Esophagus muscularis mucosa (tissue), 4 donors: ENCODE measurements at regions of chr6 and their contacts with region 1.

Region 1: DNA sequence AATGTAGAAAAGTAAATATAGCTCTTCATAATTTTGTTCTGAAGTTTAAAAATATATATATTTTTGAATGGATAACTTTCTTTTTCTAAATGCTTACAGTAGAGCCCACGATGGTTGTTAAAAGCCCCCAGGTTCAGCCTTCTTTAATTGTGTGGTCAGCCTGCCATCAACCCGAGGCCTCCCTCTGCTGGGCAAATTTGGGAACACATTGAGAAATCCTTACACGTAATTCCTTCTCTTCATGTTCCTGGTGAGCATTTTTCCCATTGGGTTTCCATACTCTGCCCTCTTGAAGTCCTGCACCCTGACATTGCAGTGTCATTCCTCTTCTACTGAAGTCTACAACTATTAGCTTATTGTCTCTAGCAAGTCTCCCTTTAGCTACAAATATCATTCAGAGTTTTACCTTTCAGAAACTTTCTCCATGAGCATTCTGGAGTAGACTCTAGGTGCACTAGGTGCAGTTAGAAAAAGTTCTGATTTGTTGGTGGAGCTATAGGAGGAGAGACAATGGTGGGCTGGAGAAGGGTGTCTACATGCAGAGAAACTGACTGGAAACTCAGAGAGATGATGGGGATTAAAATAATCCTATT is 40.6 kb downstream of the TRIM38 start:
- DNase-seq: no peak
- H3K4me3 ChIP-seq: no peak overlapping the region
- H3K27ac ChIP-seq: no peak overlapping the region
- H3K4me1 ChIP-seq: no peaks in the 10 kb centered on the region
- H3K27me3 ChIP-seq: no peaks in the 10 kb centered on the region
- CTCF ChIP-seq: peak; percentile 76 to 90 (median 79)
- EP300 ChIP-seq: no peak
- POLR2A ChIP-seq: no peak

Region 2: GRCh38 chr6:25413207-25413905 is 589.8 kb before region 1 on chr6:
- intact Hi-C with region 1: no loop called
- DNase-seq: no peak
- H3K4me3 ChIP-seq: no peak overlapping the region
- H3K27ac ChIP-seq: no peak overlapping the region
- H3K4me1 ChIP-seq: peaks cover 0 to 29% (median 20%) of the 10 kb centered on the region in 4 donors
- H3K27me3 ChIP-seq: no peaks in the 10 kb centered on the region
- CTCF ChIP-seq: no peak
- EP300 ChIP-seq: no peak
- POLR2A ChIP-seq: no peak

Region 3: GRCh38 chr6:25717866-25718740 is 285.1 kb before region 1 on chr6:
- intact Hi-C with region 1: loop called (anchors 5 kb)
- DNase-seq: no peak
- H3K4me3 ChIP-seq: no peak overlapping the region
- H3K27ac ChIP-seq: no peak overlapping the region
- H3K4me1 ChIP-seq: no peaks in the 10 kb centered on the region
- H3K27me3 ChIP-seq: peaks cover 0 to 11% (median 0%) of the 10 kb centered on the region in 4 donors
- CTCF ChIP-seq: peak in 1 of 3 experiments; percentile 50
- EP300 ChIP-seq: no peak
- POLR2A ChIP-seq: no peak

Region 4: DNA sequence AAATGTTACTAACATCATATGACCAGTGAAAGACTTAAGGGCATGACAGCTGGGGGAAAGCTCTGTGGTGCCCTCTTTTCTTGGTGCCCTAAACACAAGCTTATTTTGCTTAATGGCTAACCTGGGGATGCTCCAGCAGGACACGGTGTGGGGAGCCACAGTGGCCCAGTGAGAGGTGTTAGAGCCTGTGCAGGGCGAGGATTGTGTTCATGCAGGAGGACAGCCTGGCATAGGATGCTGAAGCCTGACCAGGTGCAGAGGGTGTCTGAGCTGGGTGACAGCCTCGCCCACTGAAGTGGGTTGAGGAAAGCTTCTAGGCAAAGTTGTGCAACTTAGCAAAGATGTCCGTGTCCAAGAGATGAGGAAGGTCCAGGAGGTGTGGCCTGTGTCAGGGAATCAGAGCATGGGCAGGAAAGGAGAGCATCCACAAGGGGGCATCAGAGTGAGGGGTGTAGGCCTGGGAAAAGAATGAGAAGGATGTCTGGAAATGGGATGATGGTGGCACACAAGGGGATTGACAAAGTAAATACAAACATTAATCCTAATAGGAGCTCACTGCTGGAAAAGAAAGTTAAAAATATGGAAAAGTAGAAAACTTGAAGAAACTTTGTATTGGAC is 214.8 kb before region 1 on chr6:
- intact Hi-C with region 1: loop called (anchors 5 kb)
- DNase-seq: no peak
- H3K4me3 ChIP-seq: no peak overlapping the region
- H3K27ac ChIP-seq: no peak overlapping the region
- H3K4me1 ChIP-seq: no peaks in the 10 kb centered on the region
- H3K27me3 ChIP-seq: no peaks in the 10 kb centered on the region
- CTCF ChIP-seq: peak in 2 of 3 experiments; percentile 24 to 44
- EP300 ChIP-seq: no peak
- POLR2A ChIP-seq: no peak

Region 5: DNA sequence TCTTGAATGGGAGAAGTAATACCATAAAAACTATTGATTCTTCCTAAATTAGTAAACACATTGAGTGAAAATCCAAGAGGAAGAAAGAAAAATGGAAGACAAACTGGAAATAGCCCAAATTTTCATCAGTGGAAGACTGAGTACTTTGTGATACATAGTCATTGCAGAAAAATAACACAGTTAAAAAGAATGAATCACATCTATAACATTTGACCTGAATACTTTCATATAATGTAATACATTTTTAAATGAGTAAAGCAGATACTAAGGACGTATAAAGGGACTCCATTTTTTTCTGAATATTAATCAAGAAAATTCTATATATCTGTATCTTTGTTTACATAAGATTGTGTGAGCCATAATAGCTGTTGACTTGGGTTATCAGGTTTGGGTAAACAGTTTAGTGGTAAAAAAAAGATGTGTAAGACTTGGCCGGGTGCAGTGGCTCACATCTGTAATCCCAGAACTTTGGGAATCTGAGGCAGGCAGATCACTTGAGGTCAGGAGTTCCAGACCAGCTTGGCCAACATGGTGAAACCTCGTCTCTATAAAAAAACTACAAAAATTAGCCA is 68.4 kb before region 1 on chr6:
- intact Hi-C with region 1: no loop called
- DNase-seq: peak; percentile 5
- H3K4me3 ChIP-seq: no peak overlapping the region
- H3K27ac ChIP-seq: no peak overlapping the region
- H3K4me1 ChIP-seq: no peaks in the 10 kb centered on the region
- H3K27me3 ChIP-seq: no peaks in the 10 kb centered on the region
- CTCF ChIP-seq: no peak
- EP300 ChIP-seq: no peak
- POLR2A ChIP-seq: no peak

Region 6: GRCh38 chr6:26204332-26205165 is 201.4 kb after region 1 on chr6:
- intact Hi-C with region 1: no loop called
- DNase-seq: peak; percentile 97
- H3K4me3 ChIP-seq: peak overlapping the region; percentile 64 to 74 (median 72)
- H3K27ac ChIP-seq: peak overlapping the region; percentile 88 to 95 (median 94)
- H3K4me1 ChIP-seq: peaks cover 3 to 26% (median 23%) of the 10 kb centered on the region in 4 donors
- H3K27me3 ChIP-seq: peaks cover 0 to 15% (median 0%) of the 10 kb centered on the region in 4 donors
- CTCF ChIP-seq: peak in 2 of 3 experiments; percentile 22 to 56
- EP300 ChIP-seq: no peak
- POLR2A ChIP-seq: peak; percentile 71